A549 (cell line): ENCODE measurements at regions of chr2 and their contacts with region 1.

Region 1: GRCh38 chr2:11124503-11125068 is 30.7 kb upstream of the SLC66A3 start:
- DNase-seq: peak; percentile 77 to 85
- ATAC-seq: peak; percentile 83 to 93
- H3K4me3 ChIP-seq: no peak overlapping the region
- H3K27ac ChIP-seq: no peak overlapping the region; a peak in 1 of 6 replicates
- H3K4me1 ChIP-seq: 0 out of 3 replicates have a peak, but pooled peaks cover 2% of the 10 kb centered on the region
- CTCF ChIP-seq: peak; percentile 96
- EP300 ChIP-seq: no peak
- POLR2A ChIP-seq: no peak
- RAD21 ChIP-seq: peak; percentile 99

Region 2: GRCh38 chr2:10821296-10821695 is 303.3 kb before region 1 on chr2:
- CTCF ChIA-PET with region 1: interaction called, 62 read pairs
- POLR2A ChIA-PET with region 1: no interaction called
- DNase-seq: no peak
- ATAC-seq: no peak
- H3K4me3 ChIP-seq: no peak overlapping the region
- H3K27ac ChIP-seq: no peak overlapping the region
- H3K4me1 ChIP-seq: no peaks in the 10 kb centered on the region
- CTCF ChIP-seq: no peak
- EP300 ChIP-seq: no peak
- POLR2A ChIP-seq: no peak
- RAD21 ChIP-seq: no peak

Region 3: DNA sequence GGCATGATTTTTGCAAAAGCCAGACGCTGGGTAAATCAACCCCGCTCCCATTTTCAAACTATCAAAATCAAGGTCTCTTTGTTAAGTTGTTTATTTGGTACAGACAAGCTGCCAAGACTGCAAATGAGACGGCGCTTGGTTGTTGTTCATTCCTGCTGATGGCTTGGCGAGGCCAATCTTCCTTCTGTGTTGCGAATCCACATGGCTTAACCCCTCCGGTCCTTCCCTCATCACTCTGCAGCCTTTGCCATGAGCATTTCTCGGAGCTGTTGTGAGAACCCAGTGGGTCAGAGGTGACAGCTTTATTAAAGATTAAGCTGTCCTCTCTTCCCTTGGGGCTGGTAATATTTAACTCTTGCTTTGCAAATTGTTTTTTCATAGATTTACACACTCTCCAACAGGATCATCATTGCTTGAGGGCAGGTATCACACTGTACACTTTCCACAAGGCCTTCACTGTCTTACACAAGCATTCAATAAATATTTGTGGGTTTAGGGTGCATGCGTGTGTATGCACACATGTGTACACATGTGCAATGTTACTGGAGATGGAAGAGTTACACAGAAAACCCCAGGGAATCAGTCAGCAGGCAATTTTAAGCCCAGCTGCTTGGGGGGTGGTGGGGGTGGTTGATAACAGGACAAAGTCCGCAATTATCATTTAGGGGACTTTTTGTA is 240.6 kb before region 1 on chr2:
- CTCF ChIA-PET with region 1: interaction called, 18 read pairs
- POLR2A ChIA-PET with region 1: no interaction called
- DNase-seq: no peak
- ATAC-seq: peak in 1 of 2 experiments; percentile 44; a peak in 3 of 6 replicates
- H3K4me3 ChIP-seq: no peak overlapping the region
- H3K27ac ChIP-seq: peak overlapping the region in 1 of 2 experiments; percentile 6; a peak in 2 of 6 replicates
- H3K4me1 ChIP-seq: peaks cover 21% of the 10 kb centered on the region
- CTCF ChIP-seq: no peak
- EP300 ChIP-seq: no peak
- POLR2A ChIP-seq: no peak
- RAD21 ChIP-seq: no peak

Region 4: GRCh38 chr2:10993001-10993481 is 131.5 kb before region 1 on chr2:
- CTCF ChIA-PET with region 1: interaction called, 10 read pairs
- POLR2A ChIA-PET with region 1: no interaction called
- DNase-seq: peak in 1 of 2 experiments; percentile 12
- ATAC-seq: peak in 1 of 2 experiments; percentile 25; a peak in 3 of 6 replicates
- H3K4me3 ChIP-seq: no peak overlapping the region
- H3K27ac ChIP-seq: no peak overlapping the region
- H3K4me1 ChIP-seq: no peaks in the 10 kb centered on the region
- CTCF ChIP-seq: no peak
- EP300 ChIP-seq: no peak
- POLR2A ChIP-seq: no peak
- RAD21 ChIP-seq: no peak

Region 5: GRCh38 chr2:11103984-11104793 is 20.4 kb before region 1 on chr2:
- CTCF ChIA-PET with region 1: interaction called, 46 read pairs
- POLR2A ChIA-PET with region 1: no interaction called
- DNase-seq: no peak
- ATAC-seq: no peak
- H3K4me3 ChIP-seq: no peak overlapping the region
- H3K27ac ChIP-seq: no peak overlapping the region
- H3K4me1 ChIP-seq: no peaks in the 10 kb centered on the region
- CTCF ChIP-seq: no peak
- EP300 ChIP-seq: no peak
- POLR2A ChIP-seq: no peak
- RAD21 ChIP-seq: no peak

Region 6: DNA sequence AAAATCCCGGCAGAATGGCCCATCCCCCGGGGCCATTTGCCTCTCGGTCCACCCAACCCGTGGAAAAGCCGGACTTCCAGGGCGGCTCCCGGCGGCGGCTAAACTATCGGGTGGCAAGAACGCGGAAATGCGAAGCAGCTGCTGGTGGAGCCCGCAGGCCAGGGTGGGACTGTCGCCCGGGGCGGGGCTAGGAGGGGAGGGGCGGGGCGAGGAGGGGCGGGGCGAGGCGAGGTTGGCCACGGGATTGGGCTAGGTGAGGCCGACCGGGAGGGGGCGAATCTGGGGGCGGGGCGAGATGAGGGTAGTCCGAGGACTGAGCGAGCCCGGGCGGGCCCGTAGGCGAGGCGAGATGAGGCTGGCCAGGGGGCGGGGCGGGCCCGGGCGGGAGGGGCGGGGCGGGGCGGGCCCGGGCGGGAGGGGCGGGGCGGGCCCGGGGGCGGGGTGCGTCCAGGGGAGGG is 30.4 kb after region 1 on chr2:
- CTCF ChIA-PET with region 1: interaction called, 224 read pairs
- POLR2A ChIA-PET with region 1: no interaction called
- DNase-seq: peak; percentile 97 to 99
- ATAC-seq: peak; percentile 84 to 85
- H3K4me3 ChIP-seq: peak overlapping the region; percentile 72
- H3K27ac ChIP-seq: peak overlapping the region; percentile 87 to 90
- H3K4me1 ChIP-seq: peaks cover 14% of the 10 kb centered on the region
- CTCF ChIP-seq: no peak
- EP300 ChIP-seq: no peak
- POLR2A ChIP-seq: peak; percentile 78
- RAD21 ChIP-seq: peak in 1 of 2 experiments; percentile 13; a peak in 1 of 5 replicates

Region 7: GRCh38 chr2:11239666-11240462 is 115.3 kb after region 1 on chr2:
- CTCF ChIA-PET with region 1: no interaction called
- POLR2A ChIA-PET with region 1: no interaction called
- DNase-seq: peak in 1 of 2 experiments; percentile 26
- ATAC-seq: peak in 1 of 2 experiments; percentile 50; a peak in 3 of 6 replicates
- H3K4me3 ChIP-seq: no peak overlapping the region
- H3K27ac ChIP-seq: 0 out of 6 replicates have a peak overlapping the region, but pooled peaks of 1 of the 2 experiments have one; percentile 1
- H3K4me1 ChIP-seq: peaks cover 40% of the 10 kb centered on the region
- CTCF ChIP-seq: no peak
- EP300 ChIP-seq: no peak
- POLR2A ChIP-seq: no peak
- RAD21 ChIP-seq: no peak

Region 8: GRCh38 chr2:11305958-11306357 is 181.4 kb after region 1 on chr2:
- CTCF ChIA-PET with region 1: no interaction called
- POLR2A ChIA-PET with region 1: no interaction called
- DNase-seq: no peak
- ATAC-seq: peak in 1 of 2 experiments; percentile 49; a peak in 3 of 6 replicates
- H3K4me3 ChIP-seq: no peak overlapping the region
- H3K27ac ChIP-seq: no peak overlapping the region
- H3K4me1 ChIP-seq: peaks cover 33% of the 10 kb centered on the region
- CTCF ChIP-seq: no peak
- EP300 ChIP-seq: no peak
- POLR2A ChIP-seq: no peak
- RAD21 ChIP-seq: no peak

Region 9: DNA sequence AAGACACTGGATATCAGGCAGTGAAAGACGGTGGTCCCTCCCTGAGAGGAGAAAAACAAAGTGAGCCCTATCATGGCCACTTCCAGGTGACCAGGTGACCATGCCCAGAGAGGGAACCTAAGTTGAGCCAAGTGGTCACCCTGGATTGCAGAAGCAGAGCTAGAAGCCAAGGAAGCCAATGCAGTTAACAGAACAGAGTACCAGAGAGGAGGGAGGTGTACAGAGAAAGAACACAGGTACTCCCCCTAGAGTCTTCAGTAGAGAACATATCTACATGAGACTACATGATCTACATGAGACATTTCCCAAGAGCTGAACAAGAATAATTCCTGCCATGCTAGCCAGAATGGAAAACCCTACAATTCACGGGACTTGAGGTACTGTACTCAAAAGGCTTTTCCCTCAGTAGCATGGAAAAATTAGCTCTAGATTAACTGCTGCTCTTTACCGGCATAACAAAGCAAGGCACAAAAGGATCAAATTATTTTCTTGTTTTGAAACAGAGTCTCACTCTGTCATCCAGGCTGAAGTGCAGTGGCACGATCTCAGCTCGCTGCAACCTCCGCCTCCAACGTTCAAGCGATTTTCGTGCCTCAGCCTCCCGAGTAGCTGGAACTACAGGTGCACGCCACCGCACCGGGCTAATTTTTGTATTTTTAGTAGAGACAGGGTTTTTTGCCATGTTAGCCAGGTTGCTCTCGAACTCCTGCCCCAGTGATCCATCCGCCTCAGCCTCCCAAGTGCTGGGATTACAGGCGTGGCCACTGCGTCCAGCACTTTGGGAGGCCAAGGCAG is 196.3 kb after region 1 on chr2:
- CTCF ChIA-PET with region 1: no interaction called
- POLR2A ChIA-PET with region 1: no interaction called
- DNase-seq: peak in 1 of 2 experiments; percentile 35
- ATAC-seq: peak; percentile 87 to 88
- H3K4me3 ChIP-seq: no peak overlapping the region
- H3K27ac ChIP-seq: no peak overlapping the region
- H3K4me1 ChIP-seq: peaks cover 3% of the 10 kb centered on the region; the same call in 1 of the 3 replicates
- CTCF ChIP-seq: peak; percentile 5; the same call in 1 of the 3 replicates
- EP300 ChIP-seq: no peak
- POLR2A ChIP-seq: no peak
- RAD21 ChIP-seq: no peak